Heart left ventricle (tissue), 16 donors: ENCODE measurements at regions of chr3 and their contacts with region 1.

Region 1: DNA sequence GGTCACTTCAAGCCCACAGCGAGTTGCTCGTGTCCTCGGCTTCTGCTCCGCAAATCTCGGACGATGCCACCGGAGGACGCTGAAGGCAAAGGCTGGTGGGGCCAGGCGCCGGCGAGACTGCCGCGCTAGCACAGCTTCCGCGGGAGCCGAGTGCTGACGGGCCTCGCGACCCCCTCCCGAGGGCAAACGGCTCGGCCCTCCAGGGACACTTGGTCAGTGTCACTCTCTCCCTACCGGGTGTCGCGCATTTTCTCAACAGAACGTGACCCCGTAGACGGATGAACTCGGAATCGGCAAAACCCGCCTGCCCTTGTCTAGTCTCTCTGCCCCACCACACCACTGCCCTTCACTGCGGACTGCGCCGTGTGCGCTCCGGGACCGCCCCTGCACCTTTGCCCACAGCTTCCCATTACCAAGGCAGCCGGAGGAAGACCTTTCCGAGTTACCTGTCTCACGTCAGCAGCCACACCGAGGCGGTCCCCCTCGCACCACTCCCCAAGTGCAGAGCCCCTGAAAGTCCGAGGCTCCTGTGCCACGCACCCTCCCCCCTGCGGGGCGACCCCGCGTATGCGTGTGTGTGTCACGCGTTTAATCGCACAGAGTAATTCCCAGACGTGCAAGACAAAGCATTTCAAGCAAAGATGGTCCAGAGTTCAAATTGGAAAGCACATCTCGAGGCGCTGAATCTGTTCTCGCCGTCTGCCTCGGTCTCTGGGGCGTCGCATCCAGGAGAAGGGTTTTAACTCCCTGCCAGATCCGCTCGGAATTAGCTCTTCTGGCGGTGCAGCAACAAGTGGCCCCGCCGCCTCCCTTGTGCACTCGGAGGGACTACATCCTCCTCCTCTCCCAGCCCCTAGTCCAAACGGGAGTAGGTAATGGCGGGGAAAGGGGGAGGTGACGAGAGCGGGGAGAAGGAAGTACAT is 245.0 kb upstream of the TOPAZ1 start:
- DNase-seq: no peak
- ATAC-seq: peak in 2 of 4 donors; percentile 33 to 61
- H3K4me3 ChIP-seq: peak overlapping the region in 8 of 12 donors; percentile 7 to 42 (median 22)
- H3K27ac ChIP-seq: no peak overlapping the region
- H3K4me1 ChIP-seq: peaks cover 0 to 52% (median 37%) of the 10 kb centered on the region in 12 donors
- H3K27me3 ChIP-seq: peaks cover 54 to 100% (median 74%) of the 10 kb centered on the region in 9 donors
- CTCF ChIP-seq: peak in 3 of 12 donors; percentile 5 to 27 (median 7)
- POLR2A ChIP-seq: no peak

Region 2: DNA sequence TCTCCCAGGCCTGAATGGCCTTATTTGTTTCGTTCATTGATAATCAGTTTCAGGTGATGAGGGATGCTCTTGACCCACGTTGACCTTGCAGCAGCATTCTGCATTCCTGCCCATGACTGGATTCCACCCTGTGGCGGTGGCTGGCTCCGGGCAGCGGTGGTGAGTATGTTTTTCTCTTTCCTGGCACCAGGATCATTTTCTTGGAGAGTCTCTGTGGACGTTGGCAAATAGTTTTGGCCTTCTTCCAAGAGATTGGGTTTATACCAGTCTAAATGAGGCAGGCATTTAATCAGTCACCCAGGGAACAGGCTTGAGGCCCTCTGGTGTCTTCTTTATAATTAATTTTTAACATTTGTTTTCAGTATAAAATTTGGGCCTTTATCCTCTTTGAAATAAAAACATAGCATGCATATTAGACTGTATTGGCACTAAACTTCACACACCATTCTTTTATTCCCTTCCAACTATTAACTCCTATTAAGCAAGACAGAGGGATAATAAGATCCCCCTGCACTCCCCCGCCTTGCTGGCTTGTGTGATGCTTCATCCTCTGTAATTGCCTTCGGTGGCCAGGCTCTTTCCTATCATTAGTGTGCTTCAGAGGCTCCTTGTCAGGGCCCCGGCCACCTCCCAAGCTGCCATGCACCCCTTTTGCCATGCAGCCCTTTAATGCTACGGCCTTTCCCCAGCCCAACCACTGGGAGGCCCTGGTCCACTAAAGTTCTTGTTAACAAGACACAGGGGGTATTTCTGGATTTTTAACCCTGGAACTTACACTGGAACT is 68.9 kb after region 1 on chr3:
- intact Hi-C with region 1: loop called in 1 of 10 experiments (anchors 2 kb)
- DNase-seq: peak in 2 of 5 donors; percentile 21 to 34
- ATAC-seq: peak; percentile 88 to 91 (median 90)
- H3K4me3 ChIP-seq: no peak overlapping the region
- H3K27ac ChIP-seq: no peak overlapping the region
- H3K4me1 ChIP-seq: peaks cover 0 to 9% (median 0%) of the 10 kb centered on the region in 12 donors
- H3K27me3 ChIP-seq: peaks cover 0 to 24% (median 6%) of the 10 kb centered on the region in 9 donors
- CTCF ChIP-seq: no peak
- POLR2A ChIP-seq: no peak